B cell (primary cell): ENCODE measurements at regions of chr7 and their contacts with region 1.

Region 1: GRCh38 chr7:128398016-128398840 is 11.6 kb downstream of the IMPDH1 start:
- DNase-seq: peak; percentile 57
- ATAC-seq: peak; percentile 65
- H3K4me3 ChIP-seq: no peak overlapping the region
- H3K4me3 Mint-ChIP-seq: no peak overlapping the region
- H3K27ac ChIP-seq: no peak overlapping the region
- H3K27ac Mint-ChIP-seq: no peak overlapping the region
- H3K4me1 ChIP-seq: no peaks in the 10 kb centered on the region
- H3K4me1 Mint-ChIP-seq: no peaks in the 10 kb centered on the region
- H3K27me3 ChIP-seq: no peaks in the 10 kb centered on the region
- H3K27me3 Mint-ChIP-seq: no peaks in the 10 kb centered on the region
- CTCF ChIP-seq: peak; percentile 88

Region 2: GRCh38 chr7:128362670-128363069 is 35.6 kb before region 1 on chr7:
- CTCF ChIA-PET with region 1: no interaction called
- POLR2A ChIA-PET with region 1: no interaction called
- intact Hi-C with region 1: no loop called
- DNase-seq: no peak
- ATAC-seq: no peak
- H3K4me3 ChIP-seq: no peak overlapping the region
- H3K4me3 Mint-ChIP-seq: peak overlapping the region; percentile 79
- H3K27ac ChIP-seq: no peak overlapping the region
- H3K27ac Mint-ChIP-seq: no peak overlapping the region
- H3K4me1 ChIP-seq: peaks cover 15 to 16% of the 10 kb centered on the region in 2 donors
- H3K4me1 Mint-ChIP-seq: peaks cover 17% of the 10 kb centered on the region
- H3K27me3 ChIP-seq: peaks cover 0 to 61% (median 32%) of the 10 kb centered on the region in 4 experiments
- H3K27me3 Mint-ChIP-seq: peaks cover 79% of the 10 kb centered on the region
- CTCF ChIP-seq: no peak

Region 3: GRCh38 chr7:128415217-128415785 is 17.1 kb after region 1 on chr7:
- CTCF ChIA-PET with region 1: interaction called, 10 read pairs
- POLR2A ChIA-PET with region 1: interaction called, 3 read pairs
- intact Hi-C with region 1: no loop called
- DNase-seq: no peak
- ATAC-seq: no peak
- H3K4me3 ChIP-seq: no peak overlapping the region
- H3K4me3 Mint-ChIP-seq: no peak overlapping the region
- H3K27ac ChIP-seq: no peak overlapping the region
- H3K27ac Mint-ChIP-seq: no peak overlapping the region
- H3K4me1 ChIP-seq: peaks cover 3 to 10% of the 10 kb centered on the region in 2 donors
- H3K4me1 Mint-ChIP-seq: peaks cover 3% of the 10 kb centered on the region
- H3K27me3 ChIP-seq: peaks cover 0 to 4% (median 0%) of the 10 kb centered on the region in 4 experiments
- H3K27me3 Mint-ChIP-seq: peaks cover 4% of the 10 kb centered on the region
- CTCF ChIP-seq: no peak